A549 (cell line): ENCODE measurements at regions of chr3 and their contacts with region 1.

Region 1: DNA sequence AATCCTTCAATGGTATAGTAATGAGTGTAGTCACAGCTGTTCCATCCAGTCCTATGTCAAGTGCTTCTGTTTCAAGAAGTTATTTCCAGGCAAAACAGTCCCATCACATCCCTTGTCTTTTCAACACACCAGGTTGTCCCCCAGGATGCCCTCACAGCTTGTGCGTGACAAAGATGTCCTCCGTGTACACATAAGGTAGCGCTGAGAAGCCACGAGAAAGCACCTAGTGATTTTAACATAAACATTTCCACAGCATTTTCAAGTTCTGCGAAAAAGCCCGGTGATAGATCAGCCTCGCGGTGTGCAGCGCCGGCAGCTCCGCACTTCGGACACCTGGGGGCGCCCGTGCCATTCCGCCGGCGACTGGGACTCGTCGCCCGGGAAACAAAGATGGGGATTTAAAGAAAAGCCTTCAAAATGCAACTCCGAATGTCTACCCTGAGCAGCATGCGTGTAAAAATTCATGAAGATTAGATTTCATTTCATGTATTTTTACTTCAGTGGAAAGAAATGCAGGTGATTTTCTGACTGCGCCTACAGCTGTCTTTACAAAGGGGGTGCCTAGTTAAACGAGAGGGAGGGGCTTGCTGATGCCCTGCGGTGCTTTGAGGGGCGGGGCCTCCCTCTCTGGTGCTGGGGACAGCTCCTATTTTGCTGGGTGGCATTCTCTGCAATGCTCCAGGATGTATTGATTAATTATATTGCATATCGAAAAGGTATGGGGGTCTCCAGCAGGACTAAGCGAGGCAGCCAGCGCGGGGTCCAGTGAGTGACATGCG is 49.9 kb downstream of the KY start:
- DNase-seq: peak; percentile 46 to 67
- ATAC-seq: peak; percentile 75 to 93; a peak in 5 of 6 replicates
- H3K4me3 ChIP-seq: no peak overlapping the region
- H3K27ac ChIP-seq: no peak overlapping the region
- H3K4me1 ChIP-seq: no peaks in the 10 kb centered on the region
- CTCF ChIP-seq: peak; percentile 77
- EP300 ChIP-seq: no peak
- POLR2A ChIP-seq: no peak
- RAD21 ChIP-seq: peak; percentile 83 to 85

Region 2: DNA sequence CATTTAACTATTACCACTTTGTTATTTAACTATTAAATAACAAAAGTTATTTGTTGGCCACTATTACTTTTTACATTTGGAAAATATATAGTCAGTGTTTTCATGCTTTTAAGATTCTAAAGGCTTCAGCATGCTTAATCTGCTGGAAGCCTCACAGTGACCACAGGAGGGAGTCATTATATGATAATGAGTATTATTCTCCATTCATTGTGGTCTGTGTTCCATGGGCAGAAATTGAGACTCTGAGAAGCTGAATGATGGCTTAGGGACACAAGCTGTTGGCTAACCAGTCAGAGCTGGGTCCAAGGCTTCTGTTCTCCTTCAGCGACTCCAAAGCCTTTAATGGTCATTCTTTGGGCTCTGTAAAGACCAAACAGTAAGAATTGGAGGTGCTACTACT is 1136.3 kb before region 1 on chr3:
- CTCF ChIA-PET with region 1: no interaction called
- POLR2A ChIA-PET with region 1: no interaction called
- DNase-seq: peak in 1 of 2 experiments; percentile 24
- ATAC-seq: peak; percentile 66 to 78; a peak in 5 of 6 replicates
- H3K4me3 ChIP-seq: no peak overlapping the region
- H3K27ac ChIP-seq: no peak overlapping the region
- H3K4me1 ChIP-seq: peaks cover 19% of the 10 kb centered on the region
- CTCF ChIP-seq: peak; percentile 27; the same call in 1 of the 3 replicates
- EP300 ChIP-seq: no peak
- POLR2A ChIP-seq: no peak
- RAD21 ChIP-seq: peak; percentile 20 to 44; a peak in 1 of 5 replicates

Region 3: DNA sequence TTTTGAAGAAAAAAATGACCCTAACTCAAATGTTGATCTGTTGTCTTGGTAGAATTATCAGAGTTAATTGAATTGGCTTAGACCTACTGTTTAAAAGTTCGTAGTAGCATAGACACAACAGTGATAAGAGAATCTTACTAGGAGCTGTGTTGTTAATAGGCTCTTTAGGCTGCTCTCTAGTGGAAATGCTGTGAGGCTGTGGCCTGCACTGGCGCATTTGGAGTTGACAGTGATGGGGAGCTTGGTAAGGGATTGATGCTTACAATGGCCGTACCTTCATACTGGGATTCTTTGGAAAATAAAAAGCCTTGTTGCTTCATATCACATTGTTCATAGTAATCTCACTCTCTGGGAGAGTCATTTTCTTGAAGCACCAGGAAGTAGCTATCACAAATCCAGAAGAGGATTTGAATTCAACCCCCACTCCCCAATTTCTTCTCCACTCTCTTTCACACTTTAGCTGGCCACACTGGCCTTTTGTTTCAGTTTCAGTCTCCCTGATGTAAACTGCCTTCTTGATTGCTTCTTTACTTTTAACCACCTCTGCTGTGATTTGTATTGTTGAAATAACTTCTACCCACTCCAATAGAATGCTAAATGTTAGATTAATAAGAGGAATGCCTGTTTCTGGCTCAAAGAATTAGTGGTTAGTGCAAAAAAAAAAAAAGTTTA is 58.5 kb before region 1 on chr3:
- CTCF ChIA-PET with region 1: no interaction called
- POLR2A ChIA-PET with region 1: no interaction called
- DNase-seq: no peak
- ATAC-seq: no peak
- H3K4me3 ChIP-seq: no peak overlapping the region
- H3K27ac ChIP-seq: no peak overlapping the region
- H3K4me1 ChIP-seq: no peaks in the 10 kb centered on the region
- CTCF ChIP-seq: no peak
- EP300 ChIP-seq: no peak
- POLR2A ChIP-seq: no peak
- RAD21 ChIP-seq: no peak

Region 4: GRCh38 chr3:134590766-134591165 is 10.1 kb before region 1 on chr3:
- CTCF ChIA-PET with region 1: interaction called, 14 read pairs
- POLR2A ChIA-PET with region 1: no interaction called
- DNase-seq: no peak
- ATAC-seq: peak in 1 of 2 experiments; percentile 34; a peak in 2 of 6 replicates
- H3K4me3 ChIP-seq: no peak overlapping the region
- H3K27ac ChIP-seq: no peak overlapping the region
- H3K4me1 ChIP-seq: no peaks in the 10 kb centered on the region
- CTCF ChIP-seq: no peak
- EP300 ChIP-seq: no peak
- POLR2A ChIP-seq: no peak
- RAD21 ChIP-seq: no peak

Region 5: GRCh38 chr3:134614955-134615354 is 14.1 kb after region 1 on chr3:
- CTCF ChIA-PET with region 1: interaction called, 21 read pairs
- POLR2A ChIA-PET with region 1: no interaction called
- DNase-seq: no peak
- ATAC-seq: no peak
- H3K4me3 ChIP-seq: no peak overlapping the region
- H3K27ac ChIP-seq: no peak overlapping the region
- H3K4me1 ChIP-seq: no peaks in the 10 kb centered on the region
- CTCF ChIP-seq: no peak
- EP300 ChIP-seq: no peak
- POLR2A ChIP-seq: no peak
- RAD21 ChIP-seq: no peak

Region 6: GRCh38 chr3:134754768-134755559 is 154.1 kb after region 1 on chr3:
- CTCF ChIA-PET with region 1: interaction called, 11 read pairs
- POLR2A ChIA-PET with region 1: no interaction called
- DNase-seq: peak; percentile 19 to 22
- ATAC-seq: peak; percentile 83 to 97; a peak in 5 of 6 replicates
- H3K4me3 ChIP-seq: no peak overlapping the region
- H3K27ac ChIP-seq: no peak overlapping the region
- H3K4me1 ChIP-seq: no peaks in the 10 kb centered on the region
- CTCF ChIP-seq: peak; percentile 28
- EP300 ChIP-seq: no peak
- POLR2A ChIP-seq: no peak
- RAD21 ChIP-seq: peak in 1 of 2 experiments; percentile 29; a peak in 2 of 5 replicates

Region 7: GRCh38 chr3:134874737-134875413 is 274.0 kb after region 1 on chr3:
- CTCF ChIA-PET with region 1: no interaction called
- POLR2A ChIA-PET with region 1: no interaction called
- DNase-seq: no peak
- ATAC-seq: no peak
- H3K4me3 ChIP-seq: no peak overlapping the region
- H3K27ac ChIP-seq: no peak overlapping the region
- H3K4me1 ChIP-seq: no peaks in the 10 kb centered on the region
- CTCF ChIP-seq: no peak
- EP300 ChIP-seq: no peak
- POLR2A ChIP-seq: no peak
- RAD21 ChIP-seq: no peak

Region 8: GRCh38 chr3:135503760-135504686 is 903.1 kb after region 1 on chr3:
- CTCF ChIA-PET with region 1: interaction called, 16 read pairs
- POLR2A ChIA-PET with region 1: no interaction called
- DNase-seq: peak; percentile 36 to 41
- ATAC-seq: peak; percentile 93 to 96
- H3K4me3 ChIP-seq: no peak overlapping the region
- H3K27ac ChIP-seq: no peak overlapping the region
- H3K4me1 ChIP-seq: no peaks in the 10 kb centered on the region
- CTCF ChIP-seq: peak; percentile 42
- EP300 ChIP-seq: no peak
- POLR2A ChIP-seq: no peak
- RAD21 ChIP-seq: peak; percentile 53 to 68